HAP-1 (cell line): ENCODE measurements at regions of chr9 and their contacts with region 1.

Region 1: DNA sequence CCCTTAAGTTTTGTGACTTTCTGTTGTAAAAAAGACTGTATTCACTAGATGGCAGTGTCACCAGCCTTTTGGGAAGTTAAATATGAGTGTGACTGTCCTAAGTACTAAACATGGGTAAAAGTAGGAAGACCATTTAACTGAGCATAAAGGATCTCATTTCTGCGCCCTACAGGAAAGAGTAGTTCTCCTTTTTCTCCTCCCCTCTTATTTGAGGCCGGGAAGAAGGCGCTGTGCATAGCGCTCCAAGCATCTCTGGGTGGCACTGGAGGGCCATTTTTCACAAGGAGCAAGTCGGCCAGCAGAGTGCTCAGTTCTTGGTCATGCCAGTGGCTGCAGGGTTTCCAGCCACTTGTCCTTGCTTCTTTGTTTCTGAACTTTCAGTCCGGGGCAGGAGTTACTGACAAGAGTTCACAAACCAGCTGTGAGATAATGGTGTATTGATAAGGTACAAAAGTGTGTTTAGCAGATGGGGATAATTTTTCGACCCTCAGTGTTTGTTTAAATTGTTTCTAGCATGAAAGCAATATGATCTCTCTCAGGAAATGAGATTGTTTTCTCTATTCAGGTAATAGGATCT is 227.6 kb upstream of the DMRT1 start:
- DNase-seq: peak; percentile 78 to 79
- H3K4me3 ChIP-seq: no peak overlapping the region
- H3K4me1 ChIP-seq: no peaks in the 10 kb centered on the region
- H3K27me3 ChIP-seq: no peaks in the 10 kb centered on the region

Region 2: GRCh38 chr9:385818-386398 is 228.0 kb before region 1 on chr9:
- in situ Hi-C with region 1: loop called (anchors 10 kb)
- DNase-seq: peak; percentile 65 to 73
- H3K4me3 ChIP-seq: no peak overlapping the region
- H3K4me1 ChIP-seq: peaks cover 4% of the 10 kb centered on the region; the same call in 1 of the 2 replicates
- H3K27me3 ChIP-seq: no peaks in the 10 kb centered on the region

Region 3: DNA sequence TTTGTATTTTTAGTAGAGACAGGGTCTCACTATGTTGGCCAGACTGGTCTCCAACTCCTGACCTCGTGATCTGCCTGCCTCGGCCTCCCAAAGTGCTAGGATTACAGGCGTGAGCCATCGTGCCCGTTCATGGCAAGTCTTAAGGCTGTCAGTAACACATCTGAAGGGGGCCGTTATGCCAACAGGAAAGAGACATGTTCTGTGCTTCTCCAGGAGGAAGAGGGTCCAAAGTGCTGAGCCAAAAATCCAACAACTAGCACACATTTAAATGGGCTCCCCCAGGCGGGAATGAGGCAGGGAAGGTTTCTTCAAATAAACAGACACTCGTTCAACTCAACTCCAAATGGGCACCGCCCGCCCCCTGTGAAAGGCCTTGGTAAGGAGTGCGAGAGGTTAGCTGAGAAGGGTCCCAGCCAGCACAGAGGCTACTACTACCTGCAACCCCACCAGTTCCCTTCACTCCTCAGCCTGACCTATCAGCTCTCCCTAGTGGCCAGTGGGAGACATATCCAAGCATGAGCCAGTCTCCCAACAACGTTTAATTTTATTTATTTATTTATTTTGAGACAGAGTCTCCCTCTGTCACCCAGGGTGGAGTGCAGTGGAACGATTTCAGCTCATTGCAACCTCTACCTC is 143.5 kb after region 1 on chr9:
- in situ Hi-C with region 1: loop called (anchors 10 kb)
- DNase-seq: peak; percentile 31 to 60
- H3K4me3 ChIP-seq: no peak overlapping the region
- H3K4me1 ChIP-seq: no peaks in the 10 kb centered on the region; the same call in 1 of the 2 replicates
- H3K27me3 ChIP-seq: no peaks in the 10 kb centered on the region

Region 4: DNA sequence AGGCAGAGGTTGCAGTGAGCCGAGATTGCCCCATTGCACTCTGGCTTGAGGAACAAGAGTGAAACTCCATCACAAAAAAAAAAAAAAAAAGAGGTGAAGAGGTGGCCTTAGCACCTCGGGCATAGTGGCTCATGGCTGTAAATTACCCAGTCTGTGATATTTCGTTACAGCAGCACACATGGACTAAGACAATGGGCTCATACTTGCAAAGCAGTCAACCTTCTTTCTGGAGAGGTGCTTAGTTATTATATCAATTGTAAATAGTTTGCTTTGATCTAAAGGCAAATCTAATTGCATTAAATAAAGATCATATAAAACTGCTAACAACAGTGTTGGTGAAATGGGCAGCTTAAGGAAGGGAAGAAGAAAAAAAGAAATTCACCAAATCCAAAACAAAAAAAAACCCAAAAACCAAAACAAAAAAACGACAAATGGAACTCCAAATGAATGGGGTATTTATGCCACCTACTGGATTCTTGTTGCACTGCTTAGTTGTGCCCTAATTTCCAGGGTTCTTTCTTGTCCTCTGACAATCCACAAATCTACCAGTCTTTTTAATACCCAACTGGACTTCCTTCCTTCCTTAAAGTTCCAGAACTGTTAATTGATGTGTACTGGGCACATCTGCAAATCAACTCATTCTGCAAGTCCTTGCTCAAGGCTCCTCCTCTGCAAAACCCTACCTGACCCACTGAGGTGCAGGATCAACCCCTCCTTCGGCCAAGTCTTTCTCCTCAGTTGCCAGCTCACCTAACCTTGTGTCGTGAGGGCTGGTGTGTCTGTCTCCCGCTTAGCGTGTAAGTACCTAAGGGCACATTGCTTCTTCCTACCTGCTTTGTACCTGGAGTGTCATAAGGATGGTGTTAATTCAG is 192.7 kb after region 1 on chr9:
- in situ Hi-C with region 1: loop called (anchors 5 kb)
- DNase-seq: peak; percentile 38 to 53
- H3K4me3 ChIP-seq: no peak overlapping the region
- H3K4me1 ChIP-seq: no peaks in the 10 kb centered on the region
- H3K27me3 ChIP-seq: no peaks in the 10 kb centered on the region

Region 5: DNA sequence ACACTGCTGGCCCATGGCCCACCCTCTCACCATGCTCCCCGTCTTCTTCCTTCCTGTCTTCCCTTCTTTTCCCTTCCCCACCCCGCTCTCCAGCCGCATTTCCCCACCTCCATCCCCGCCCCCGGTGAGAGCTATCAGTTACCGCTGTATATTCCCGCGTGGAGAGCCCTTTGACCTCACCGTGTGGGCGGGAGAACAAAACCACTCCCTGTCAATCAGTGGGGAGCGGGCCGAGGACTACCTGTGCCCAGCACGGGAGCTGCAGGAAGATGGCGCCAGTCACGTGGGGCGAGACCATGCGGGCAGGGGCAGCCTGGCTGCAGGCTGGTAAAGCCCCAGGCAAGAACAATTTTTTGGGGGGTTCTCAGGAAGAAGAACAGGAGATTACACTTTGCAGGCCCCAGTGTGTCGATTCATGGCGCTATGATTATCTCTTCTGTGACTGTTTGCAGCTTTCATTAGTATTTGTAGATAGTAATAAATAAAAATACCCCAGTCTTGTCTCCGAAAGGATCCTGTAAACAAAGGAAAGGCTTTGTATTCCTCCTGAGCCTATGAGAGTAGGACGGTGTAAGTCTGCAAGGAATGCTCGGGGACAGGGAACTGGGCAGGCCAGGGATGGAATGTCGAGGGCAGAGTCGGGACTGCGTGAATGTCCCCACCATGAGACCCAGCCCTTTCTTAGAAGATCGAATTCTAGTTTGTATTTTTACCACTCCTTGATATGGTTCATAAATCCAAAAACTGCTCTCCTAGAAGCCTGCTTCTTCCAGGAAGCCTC is 212.8 kb after region 1 on chr9:
- in situ Hi-C with region 1: no loop called
- DNase-seq: no peak
- H3K4me3 ChIP-seq: no peak overlapping the region
- H3K4me1 ChIP-seq: no peaks in the 10 kb centered on the region
- H3K27me3 ChIP-seq: no peaks in the 10 kb centered on the region

Region 6: DNA sequence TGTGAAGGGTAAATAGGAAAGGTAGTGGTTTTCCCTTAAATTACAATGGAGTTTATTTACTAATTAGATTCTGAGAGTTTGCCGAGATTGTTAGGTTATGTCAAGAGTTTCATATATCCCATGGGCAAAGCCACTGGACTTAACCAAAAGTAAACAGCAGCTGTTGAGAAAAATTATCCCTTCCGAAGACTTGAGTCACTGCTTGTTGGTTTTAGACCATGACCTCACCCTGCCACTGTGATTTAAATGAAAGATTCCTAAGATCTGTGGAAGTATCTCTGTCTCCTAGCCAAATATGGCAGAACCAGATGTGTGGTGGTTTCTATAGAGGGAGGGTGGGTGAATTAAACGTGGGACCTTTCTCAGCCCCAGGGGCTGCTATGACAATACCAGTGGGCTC is 381.9 kb after region 1 on chr9:
- in situ Hi-C with region 1: loop called (anchors 5 kb)
- DNase-seq: no peak
- H3K4me3 ChIP-seq: no peak overlapping the region
- H3K4me1 ChIP-seq: no peaks in the 10 kb centered on the region
- H3K27me3 ChIP-seq: no peaks in the 10 kb centered on the region